A549 (cell line): ENCODE measurements at regions of chr9 and their contacts with region 1.

Region 1: DNA sequence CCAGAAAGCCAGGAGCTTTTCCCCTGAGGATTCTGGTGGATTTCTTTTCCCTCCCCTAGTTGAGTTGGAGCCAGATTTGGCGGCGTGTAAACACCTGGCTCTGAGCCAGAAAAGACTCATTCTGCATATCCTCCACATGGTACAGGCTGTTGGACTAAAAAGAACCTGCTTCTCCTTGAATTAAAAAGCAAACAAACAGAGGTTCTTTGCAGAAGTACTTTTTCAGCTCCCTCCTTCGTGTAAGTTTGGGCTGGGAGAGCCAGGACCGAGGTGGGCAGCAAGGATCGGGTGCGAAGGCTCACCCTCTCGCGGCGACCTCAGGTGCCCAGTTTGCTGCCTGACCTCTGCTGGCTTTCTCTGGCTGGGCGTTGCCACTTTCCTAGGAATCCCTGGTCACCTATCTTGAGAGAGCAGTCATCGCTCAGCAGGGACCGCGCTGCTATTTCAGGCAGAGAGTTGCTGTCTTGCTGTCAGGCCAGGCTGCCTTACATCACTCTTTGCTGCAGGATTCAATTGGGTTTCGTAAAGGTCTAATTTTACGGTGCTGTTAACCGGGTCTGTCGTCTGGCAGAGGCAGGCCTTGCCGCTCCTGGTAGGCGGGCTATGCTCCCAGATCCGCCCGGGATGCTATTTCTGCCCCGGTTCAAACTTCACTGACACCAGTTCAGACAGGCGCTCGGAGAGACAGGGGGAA is 3.2 kb downstream of the PAPPA start:
- DNase-seq: peak; percentile 72 to 85
- ATAC-seq: peak; percentile 31 to 45; a peak in 5 of 6 replicates
- H3K4me3 ChIP-seq: peak overlapping the region; percentile 87
- H3K27ac ChIP-seq: peak overlapping the region; percentile 99 to 100
- H3K4me1 ChIP-seq: peaks cover 57% of the 10 kb centered on the region
- CTCF ChIP-seq: no peak
- EP300 ChIP-seq: peak in 1 of 2 experiments; percentile 28; a peak in 1 of 5 replicates
- POLR2A ChIP-seq: no peak
- RAD21 ChIP-seq: peak; percentile 8 to 34; a peak in 2 of 5 replicates

Region 2: GRCh38 chr9:115649991-115650472 is 506.7 kb before region 1 on chr9:
- CTCF ChIA-PET with region 1: no interaction called
- POLR2A ChIA-PET with region 1: no interaction called
- DNase-seq: no peak
- ATAC-seq: no peak
- H3K4me3 ChIP-seq: no peak overlapping the region
- H3K27ac ChIP-seq: peak overlapping the region in 1 of 2 experiments; percentile 24; a peak in 1 of 6 replicates
- H3K4me1 ChIP-seq: no peaks in the 10 kb centered on the region
- CTCF ChIP-seq: no peak
- EP300 ChIP-seq: no peak
- POLR2A ChIP-seq: no peak
- RAD21 ChIP-seq: no peak

Region 3: DNA sequence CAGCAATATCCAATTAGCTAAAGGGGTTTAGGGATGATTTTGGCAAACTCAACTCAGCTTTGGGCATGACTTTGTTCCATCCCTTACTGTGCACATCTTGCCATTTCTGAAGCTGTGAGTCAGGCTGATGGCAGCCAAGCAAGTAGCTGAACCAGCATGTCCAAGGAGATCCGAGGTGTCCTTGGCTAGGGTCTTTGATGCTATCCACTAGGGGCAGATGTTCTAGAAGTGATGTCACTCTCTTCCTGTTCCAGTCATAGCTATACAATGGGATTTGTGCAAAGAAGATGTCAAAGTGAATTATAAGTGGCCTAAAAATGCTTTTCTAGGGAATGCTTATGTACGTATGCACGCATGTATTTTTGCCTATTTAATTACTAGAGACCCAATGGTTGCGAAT is 163.9 kb before region 1 on chr9:
- CTCF ChIA-PET with region 1: interaction called, 4 read pairs
- POLR2A ChIA-PET with region 1: interaction called, 10 read pairs
- DNase-seq: peak in 1 of 2 experiments; percentile 57
- ATAC-seq: peak in 1 of 2 experiments; percentile 64; a peak in 3 of 6 replicates
- H3K4me3 ChIP-seq: no peak overlapping the region
- H3K27ac ChIP-seq: peak overlapping the region; percentile 12 to 60; a peak in 3 of 6 replicates
- H3K4me1 ChIP-seq: peaks cover 36% of the 10 kb centered on the region
- CTCF ChIP-seq: no peak
- EP300 ChIP-seq: no peak
- POLR2A ChIP-seq: no peak
- RAD21 ChIP-seq: no peak